ENCODE measurements at regions of chr12 and their contacts with region 1.

Region 1: DNA sequence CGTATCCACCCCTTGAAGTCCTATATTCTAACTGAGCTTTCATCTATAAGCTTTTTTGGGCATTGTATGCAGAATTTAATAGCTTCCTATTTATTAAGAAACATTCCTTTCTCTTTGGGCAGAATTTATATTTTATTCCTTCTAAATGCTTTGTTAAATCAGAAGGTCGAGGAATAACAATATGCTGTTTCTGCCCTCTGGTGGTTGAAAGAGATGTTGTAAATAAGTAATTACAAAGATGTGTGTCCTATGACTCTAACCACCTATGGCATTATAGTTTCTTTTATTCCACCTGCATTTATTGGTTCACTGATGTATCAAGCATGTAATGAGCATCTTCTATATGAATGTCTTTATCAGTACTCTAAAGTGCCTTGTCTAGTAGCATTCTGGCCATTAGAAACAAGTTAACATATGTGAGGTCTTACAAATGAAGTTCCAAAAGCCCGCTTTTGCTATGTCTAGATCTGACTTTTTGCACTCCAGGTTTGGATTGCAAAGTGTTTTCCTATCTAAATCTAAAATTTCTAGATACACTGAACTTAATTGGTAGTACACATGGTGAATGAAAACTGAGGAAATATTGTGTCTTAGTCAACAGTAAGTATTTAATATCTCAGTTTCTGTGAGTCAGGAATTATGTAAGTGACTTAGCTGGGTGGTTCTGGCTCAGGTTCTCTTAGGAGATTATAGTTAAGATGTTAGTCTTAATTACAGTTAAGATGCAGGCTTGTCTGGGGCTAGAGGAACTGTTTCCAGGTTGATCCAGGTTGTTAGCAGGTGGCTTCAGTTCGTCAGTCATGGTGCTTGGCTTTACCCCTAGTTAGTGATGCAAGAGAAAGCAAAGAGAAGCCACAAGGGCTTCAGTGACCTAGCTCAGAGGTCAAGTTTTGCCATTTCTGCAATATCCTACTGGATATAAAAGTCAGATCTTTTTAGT is 57.5 kb downstream of the PLEKHA5 start:
- DNase-seq: peak; percentile 63
- H3K4me3 ChIP-seq: no peak overlapping the region
- CTCF ChIP-seq: peak; percentile 11

Region 2: DNA sequence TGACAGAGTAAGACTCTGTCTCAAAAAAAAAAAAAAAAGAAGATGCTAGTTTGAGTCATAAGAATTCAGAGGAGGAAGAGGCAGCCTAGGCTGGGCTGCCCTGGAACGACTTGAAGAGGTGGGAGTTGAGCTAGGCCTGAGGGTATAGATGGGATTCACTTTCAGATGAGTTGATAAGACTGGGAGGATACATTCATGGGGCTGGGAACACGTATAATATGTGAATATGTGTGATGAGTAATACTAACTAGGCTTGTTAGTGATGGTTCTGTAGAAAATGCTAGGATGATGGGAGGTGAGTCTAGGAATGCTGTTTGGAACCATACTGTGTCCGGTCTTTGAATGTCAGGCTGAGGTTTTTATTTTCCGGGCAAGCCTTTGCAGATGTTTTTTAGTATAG is 48.4 kb before region 1 on chr12:
- in situ Hi-C with region 1: loop called (anchors 5 kb)
- DNase-seq: peak; percentile 82
- H3K4me3 ChIP-seq: no peak overlapping the region
- CTCF ChIP-seq: no peak

Measured in astrocyte of the cerebellum (primary cell).